ENCODE measurements at regions of chr15 and their contacts with region 1.

Region 1: GRCh38 chr15:59917504-59918157 is 86.5 kb upstream of the FOXB1 start:
- DNase-seq: peak; percentile 90
- ATAC-seq: peak; percentile 100
- H3K4me3 Mint-ChIP-seq: no peak overlapping the region
- H3K27ac Mint-ChIP-seq: no peak overlapping the region
- H3K4me1 Mint-ChIP-seq: peaks cover 40% of the 10 kb centered on the region
- H3K27me3 Mint-ChIP-seq: peaks cover 3% of the 10 kb centered on the region; the same call in 1 of the 2 replicates
- CTCF ChIP-seq: peak; percentile 51

Region 2: GRCh38 chr15:59779110-59779509 is 138.5 kb before region 1 on chr15:
- CTCF ChIA-PET with region 1: no interaction called
- POLR2A ChIA-PET with region 1: no interaction called
- DNase-seq: no peak
- ATAC-seq: no peak
- H3K4me3 Mint-ChIP-seq: no peak overlapping the region
- H3K27ac Mint-ChIP-seq: no peak overlapping the region
- H3K4me1 Mint-ChIP-seq: no peaks in the 10 kb centered on the region
- H3K27me3 Mint-ChIP-seq: peaks cover 3% of the 10 kb centered on the region; the same call in 1 of the 2 replicates
- CTCF ChIP-seq: no peak

Region 3: DNA sequence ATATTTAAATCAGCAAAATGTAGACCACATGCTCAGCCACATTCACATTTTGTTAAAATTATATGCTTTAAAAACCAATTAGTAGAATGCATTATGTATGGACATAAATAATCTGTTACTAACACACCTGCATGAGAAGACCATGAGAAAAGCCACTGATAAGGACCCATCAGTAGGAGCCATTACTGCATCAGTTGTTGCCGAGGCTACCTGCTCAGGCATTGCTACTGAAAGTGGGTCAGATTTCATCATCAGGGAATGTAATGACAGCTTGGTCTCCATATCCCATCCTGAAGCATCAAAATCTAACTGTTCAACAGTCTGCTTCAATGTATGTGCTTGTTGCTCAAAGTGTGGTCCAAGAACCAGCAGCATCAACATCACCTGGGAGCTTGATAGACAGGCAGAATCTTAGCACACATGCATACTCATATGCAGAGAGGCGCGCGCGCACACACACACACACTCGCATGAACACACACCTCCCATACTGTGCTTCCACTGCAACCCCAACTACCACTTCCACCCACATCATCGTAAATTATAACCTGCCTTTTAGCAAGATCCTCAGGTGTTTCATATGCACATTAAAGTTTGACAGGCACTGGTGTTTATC is 14.1 kb after region 1 on chr15:
- CTCF ChIA-PET with region 1: interaction called, 10 read pairs
- POLR2A ChIA-PET with region 1: no interaction called
- DNase-seq: no peak
- ATAC-seq: no peak
- H3K4me3 Mint-ChIP-seq: no peak overlapping the region
- H3K27ac Mint-ChIP-seq: no peak overlapping the region
- H3K4me1 Mint-ChIP-seq: peaks cover 48% of the 10 kb centered on the region
- H3K27me3 Mint-ChIP-seq: no peaks in the 10 kb centered on the region; the same call in 1 of the 2 replicates
- CTCF ChIP-seq: no peak

Region 4: GRCh38 chr15:59991834-59992233 is 74.2 kb after region 1 on chr15:
- CTCF ChIA-PET with region 1: interaction called, 42 read pairs
- POLR2A ChIA-PET with region 1: no interaction called
- DNase-seq: no peak
- ATAC-seq: no peak
- H3K4me3 Mint-ChIP-seq: no peak overlapping the region
- H3K27ac Mint-ChIP-seq: 0 out of 2 replicates have a peak overlapping the region, but pooled peaks have one; percentile 37
- H3K4me1 Mint-ChIP-seq: peaks cover 63% of the 10 kb centered on the region
- H3K27me3 Mint-ChIP-seq: no peaks in the 10 kb centered on the region; the same call in 1 of the 2 replicates
- CTCF ChIP-seq: no peak

Region 5: DNA sequence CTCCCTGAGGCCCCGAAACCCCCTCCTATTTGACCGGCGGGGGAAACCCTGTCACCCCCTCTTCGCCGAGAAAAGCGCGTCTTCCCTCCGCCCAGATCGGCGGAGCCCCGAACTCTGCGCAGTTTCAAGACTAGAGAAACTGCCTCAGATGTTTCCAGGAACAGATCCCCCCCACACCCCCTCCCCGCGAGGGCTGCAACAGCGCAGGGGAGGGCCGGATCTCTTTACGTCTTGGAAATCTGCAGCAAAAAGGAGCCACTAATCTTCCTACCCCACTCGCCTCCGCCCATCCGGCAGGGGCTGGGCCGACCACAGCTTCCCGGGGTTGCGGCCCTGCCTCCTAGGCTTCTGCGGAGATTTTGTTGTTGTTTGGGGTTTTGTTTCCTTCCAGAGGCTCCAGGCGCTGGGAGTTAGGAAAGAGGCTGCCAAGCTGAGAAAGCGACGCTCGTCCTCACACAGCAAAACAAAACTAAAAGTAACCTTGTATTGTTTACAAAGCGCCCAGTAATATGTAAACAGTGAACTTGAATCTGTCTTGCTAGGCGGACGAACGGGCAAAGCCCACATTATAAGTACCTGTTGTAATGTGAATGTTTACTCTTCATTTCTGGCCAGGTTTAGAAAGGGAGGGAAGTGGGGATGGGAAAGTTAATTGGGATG is 88.7 kb after region 1 on chr15:
- CTCF ChIA-PET with region 1: interaction called, 30 read pairs
- POLR2A ChIA-PET with region 1: interaction called, 3 read pairs
- DNase-seq: peak; percentile 88
- ATAC-seq: peak; percentile 54
- H3K4me3 Mint-ChIP-seq: peak overlapping the region; percentile 87
- H3K27ac Mint-ChIP-seq: peak overlapping the region; percentile 97
- H3K4me1 Mint-ChIP-seq: peaks cover 66% of the 10 kb centered on the region
- H3K27me3 Mint-ChIP-seq: peaks cover 31% of the 10 kb centered on the region
- CTCF ChIP-seq: no peak

Region 6: DNA sequence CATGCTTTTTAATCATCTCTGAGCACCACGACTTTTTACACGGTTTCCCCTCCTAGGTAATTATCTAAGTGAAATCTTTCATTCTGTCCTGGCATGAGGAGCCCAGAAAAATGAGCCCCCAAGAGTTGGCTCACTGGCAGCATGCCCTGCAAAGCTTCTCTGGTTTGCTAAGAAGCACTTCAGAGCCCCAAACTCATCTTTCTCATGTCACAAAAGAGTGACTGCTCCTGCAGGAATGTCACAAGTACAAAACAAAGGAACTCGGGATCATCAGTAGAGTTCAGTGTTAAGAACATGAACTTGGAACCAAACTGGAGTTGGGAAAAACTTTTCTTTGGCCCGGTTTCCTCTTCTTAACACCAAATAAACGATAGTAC is 210.4 kb after region 1 on chr15:
- CTCF ChIA-PET with region 1: interaction called, 17 read pairs
- POLR2A ChIA-PET with region 1: no interaction called
- DNase-seq: no peak
- ATAC-seq: no peak
- H3K4me3 Mint-ChIP-seq: peak overlapping the region; percentile 71
- H3K27ac Mint-ChIP-seq: peak overlapping the region; percentile 94
- H3K4me1 Mint-ChIP-seq: peaks cover 48% of the 10 kb centered on the region
- H3K27me3 Mint-ChIP-seq: peaks cover 2% of the 10 kb centered on the region
- CTCF ChIP-seq: no peak; the same call in 1 of the 2 replicates

Region 7: DNA sequence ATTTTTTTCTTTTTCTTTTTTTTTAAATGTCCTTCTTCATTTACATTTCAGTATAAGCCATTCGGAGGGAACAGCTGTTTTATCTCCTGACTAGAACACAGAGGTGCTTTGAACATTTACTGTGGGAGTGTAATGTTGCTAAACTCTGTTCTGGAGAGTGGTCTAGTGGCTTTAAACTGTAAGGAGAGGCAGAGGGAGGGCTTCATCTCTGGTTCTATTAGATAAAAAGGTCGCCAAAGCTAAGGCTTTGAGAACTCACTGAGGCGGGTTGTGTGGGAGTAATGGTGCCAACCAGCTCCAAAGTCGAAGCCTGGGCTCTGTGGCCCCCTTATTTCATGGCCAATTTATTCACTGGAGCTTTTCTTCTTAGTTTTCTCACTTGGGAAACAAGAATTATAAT is 346.9 kb after region 1 on chr15:
- CTCF ChIA-PET with region 1: no interaction called
- POLR2A ChIA-PET with region 1: no interaction called
- DNase-seq: no peak
- ATAC-seq: no peak
- H3K4me3 Mint-ChIP-seq: no peak overlapping the region
- H3K27ac Mint-ChIP-seq: no peak overlapping the region
- H3K4me1 Mint-ChIP-seq: peaks cover 4% of the 10 kb centered on the region
- H3K27me3 Mint-ChIP-seq: no peaks in the 10 kb centered on the region
- CTCF ChIP-seq: no peak

Region 8: DNA sequence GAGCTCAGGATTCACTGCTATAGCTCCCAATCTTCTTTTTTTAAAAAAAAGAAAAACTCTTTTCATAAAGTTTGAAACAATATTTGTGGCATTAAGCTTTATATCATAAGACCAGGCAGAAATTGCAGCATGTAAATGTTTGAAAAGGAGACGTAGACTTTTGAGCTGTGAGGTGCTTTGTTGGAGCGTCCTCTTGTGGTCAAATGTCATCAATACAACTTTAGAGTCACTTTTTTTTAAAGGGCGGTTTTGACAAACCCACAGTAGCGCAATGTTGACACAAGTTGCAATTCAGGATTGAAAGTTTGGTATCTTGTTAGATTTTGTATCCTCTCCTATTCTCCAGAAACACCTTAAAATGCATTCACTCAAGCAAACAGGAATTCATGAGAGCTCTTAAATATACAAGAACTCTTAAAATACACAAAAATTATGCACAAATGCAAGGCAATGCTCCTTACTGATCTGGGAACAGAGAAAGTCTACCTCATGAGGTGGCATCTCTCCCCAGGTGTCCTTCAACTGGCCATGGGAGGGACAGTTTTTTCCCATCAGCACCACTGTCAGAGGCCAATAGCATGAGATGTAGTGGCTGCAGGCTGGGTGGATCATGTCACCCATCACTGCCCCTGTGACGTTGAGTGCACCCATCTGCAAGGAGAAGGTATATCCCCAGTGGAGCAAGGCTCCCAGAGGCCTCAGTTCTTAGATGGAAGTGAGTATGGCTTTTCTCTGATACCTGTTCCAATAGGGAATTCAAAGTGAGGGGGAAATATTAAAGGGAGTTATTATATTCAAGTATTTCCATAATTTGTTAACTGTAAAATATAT is 409.4 kb after region 1 on chr15:
- CTCF ChIA-PET with region 1: interaction called, 44 read pairs
- POLR2A ChIA-PET with region 1: no interaction called
- DNase-seq: no peak
- ATAC-seq: no peak
- H3K4me3 Mint-ChIP-seq: no peak overlapping the region
- H3K27ac Mint-ChIP-seq: no peak overlapping the region
- H3K4me1 Mint-ChIP-seq: peaks cover 47% of the 10 kb centered on the region
- H3K27me3 Mint-ChIP-seq: no peaks in the 10 kb centered on the region
- CTCF ChIP-seq: peak; percentile 77

Measured in WTC11 (cell line).